ENCODE measurements at regions of chr10 and their contacts with region 1.

Region 1: DNA sequence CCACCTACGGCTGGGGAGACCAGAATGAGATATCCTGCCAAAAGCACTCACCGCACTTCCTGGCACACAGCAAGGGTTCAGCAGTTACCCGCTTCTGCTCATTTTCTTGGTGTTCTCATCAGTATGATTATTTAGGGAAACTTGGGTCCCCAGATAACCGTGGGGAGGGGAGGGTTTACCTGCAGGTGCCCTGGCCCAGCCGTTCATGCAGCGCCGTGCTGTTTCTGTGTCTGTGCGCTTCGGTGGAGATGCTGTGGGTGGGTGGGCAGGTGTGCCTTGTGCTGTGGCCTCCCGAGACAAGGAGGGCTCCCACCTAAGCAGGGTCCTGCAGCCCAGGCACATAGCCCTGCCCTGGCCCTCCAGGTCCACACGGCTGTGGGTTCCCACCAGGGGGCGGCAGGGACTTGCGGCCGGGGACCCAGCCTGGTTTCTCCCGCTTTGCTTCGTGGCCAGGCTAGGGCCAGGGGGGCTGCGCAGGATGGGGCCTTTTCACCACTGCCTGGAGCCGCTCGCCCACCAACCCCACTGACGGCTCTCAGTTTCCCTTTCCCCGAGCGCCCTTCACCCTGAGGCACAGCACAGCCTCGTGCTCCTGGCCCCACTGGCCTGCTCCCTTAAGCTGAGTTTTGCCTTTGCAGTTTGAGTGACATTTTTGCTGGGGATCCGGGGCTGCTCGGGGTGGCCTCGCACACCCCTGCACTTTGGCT is 78.5 kb downstream of the LHPP start:
- DNase-seq: peak; percentile 68
- H3K4me3 Mint-ChIP-seq: no peak overlapping the region
- H3K27ac Mint-ChIP-seq: no peak overlapping the region
- H3K4me1 Mint-ChIP-seq: no peaks in the 10 kb centered on the region
- H3K27me3 Mint-ChIP-seq: no peaks in the 10 kb centered on the region

Region 2: GRCh38 chr10:124565565-124566256 is 25.6 kb after region 1 on chr10:
- CTCF ChIA-PET with region 1: no interaction called
- POLR2A ChIA-PET with region 1: no interaction called
- DNase-seq: no peak
- H3K4me3 Mint-ChIP-seq: no peak overlapping the region
- H3K27ac Mint-ChIP-seq: no peak overlapping the region
- H3K4me1 Mint-ChIP-seq: no peaks in the 10 kb centered on the region
- H3K27me3 Mint-ChIP-seq: peaks cover 3% of the 10 kb centered on the region

Region 3: DNA sequence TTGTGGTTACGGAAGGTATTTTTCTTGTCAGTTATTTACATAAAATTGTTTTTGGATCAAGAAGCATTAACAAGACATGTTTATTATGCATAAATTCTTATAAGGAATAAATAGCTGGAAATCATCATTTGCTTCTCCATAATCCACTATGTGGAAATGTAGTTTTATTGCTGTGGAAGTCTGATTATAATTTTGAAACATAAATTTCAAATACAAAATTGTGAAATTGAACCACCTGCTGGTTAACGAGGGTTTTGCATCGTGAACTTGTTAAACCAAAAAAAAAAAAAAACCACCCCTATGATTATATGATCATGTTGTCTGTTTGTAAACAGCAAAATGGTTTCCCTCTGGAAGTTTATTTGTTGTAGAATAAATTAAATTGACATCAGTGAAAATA is 287.4 kb after region 1 on chr10:
- CTCF ChIA-PET with region 1: interaction called, 11 read pairs
- POLR2A ChIA-PET with region 1: no interaction called
- DNase-seq: no peak
- H3K4me3 Mint-ChIP-seq: no peak overlapping the region
- H3K27ac Mint-ChIP-seq: no peak overlapping the region
- H3K4me1 Mint-ChIP-seq: no peaks in the 10 kb centered on the region
- H3K27me3 Mint-ChIP-seq: no peaks in the 10 kb centered on the region

Measured in activated CD4-positive, alpha-beta memory T cell treated with anti-CD3 and anti-CD28 coated beads, Interleukin-2, amount 10 ng/mL, durations not matched to agents 7 days and 5 days (primary cell).